Sigmoid colon (tissue), 7 donors: ENCODE measurements at regions of chr9 and their contacts with region 1.

Region 1: GRCh38 chr9:124776954-124777665 is at the start of gene OLFML2A:
- DNase-seq: peak; percentile 80
- H3K4me3 ChIP-seq: peak within 1 kb of the TSS; percentile 42 to 74 (median 72)
- H3K27ac ChIP-seq: peak within 1 kb of the TSS; percentile 85 to 87 (median 86)
- H3K4me1 ChIP-seq: peaks cover 0 to 71% (median 52%) of the 10 kb centered on the region in 4 donors
- H3K27me3 ChIP-seq: no peaks in the 10 kb centered on the region
- CTCF ChIP-seq: peak in 1 of 4 experiments; percentile 52
- EP300 ChIP-seq: no peak
- POLR2A ChIP-seq: no peak
- total RNA-seq, gene OLFML2A: 60.0 to 147 (median 65.5) TPM

Region 2: GRCh38 chr9:124795881-124796415 is 18.8 kb after region 1 on chr9:
- intact Hi-C with region 1: loop called (anchors 2 kb)
- DNase-seq: no peak
- H3K4me3 ChIP-seq: no peak overlapping the region
- H3K27ac ChIP-seq: peak overlapping the region; percentile 65 to 85 (median 78)
- H3K4me1 ChIP-seq: peaks cover 0 to 50% (median 38%) of the 10 kb centered on the region in 4 donors
- H3K27me3 ChIP-seq: no peaks in the 10 kb centered on the region
- CTCF ChIP-seq: no peak
- EP300 ChIP-seq: no peak
- POLR2A ChIP-seq: no peak

Region 3: GRCh38 chr9:124839612-124840299 is 62.6 kb after region 1 on chr9:
- intact Hi-C with region 1: loop called (anchors 5 kb)
- DNase-seq: no peak
- H3K4me3 ChIP-seq: no peak overlapping the region
- H3K27ac ChIP-seq: no peak overlapping the region
- H3K4me1 ChIP-seq: peaks cover 0 to 18% (median 15%) of the 10 kb centered on the region in 4 donors
- H3K27me3 ChIP-seq: no peaks in the 10 kb centered on the region
- CTCF ChIP-seq: peak in 2 of 4 experiments; percentile 41 to 45
- EP300 ChIP-seq: no peak
- POLR2A ChIP-seq: no peak